ENCODE measurements at regions of chr9 and their contacts with region 1.

Region 1: DNA sequence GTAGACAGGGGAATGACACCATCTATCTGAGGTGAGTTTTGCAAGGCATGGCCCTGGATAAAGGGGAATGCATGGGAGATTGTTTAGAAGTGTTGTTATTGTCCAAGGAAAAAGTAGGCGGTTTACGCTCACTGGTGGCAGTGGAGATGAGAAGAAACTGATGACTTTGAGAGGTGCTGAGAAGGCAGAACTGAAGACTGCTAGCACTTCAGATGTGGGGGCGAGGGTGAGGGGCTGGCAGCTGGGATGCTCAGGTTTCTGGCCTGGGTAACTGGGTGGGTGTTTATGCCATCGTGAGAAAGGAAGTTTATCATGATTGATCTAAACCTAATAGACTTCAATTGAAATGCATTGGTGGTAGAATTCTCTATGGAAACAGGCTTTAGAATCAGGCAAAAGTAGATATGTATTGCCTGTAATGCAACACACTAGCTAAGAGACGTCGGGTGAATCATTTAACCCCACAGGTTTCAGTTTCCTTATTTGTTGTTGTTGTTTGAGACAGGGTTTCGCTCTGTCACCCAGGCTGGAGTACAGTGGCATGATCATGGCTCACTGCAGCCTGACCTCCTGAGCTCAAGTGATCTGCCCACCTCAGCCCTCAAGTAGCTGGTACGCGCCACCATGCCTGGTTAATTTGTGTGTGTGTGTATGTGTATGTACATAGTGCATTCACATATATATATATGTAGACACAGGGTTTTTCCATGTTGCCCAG is 123.5 kb downstream of the SLC24A2 start:
- DNase-seq: no peak
- H3K4me3 Mint-ChIP-seq: no peak overlapping the region
- H3K27ac Mint-ChIP-seq: peak overlapping the region; percentile 43
- H3K4me1 Mint-ChIP-seq: peaks cover 12% of the 10 kb centered on the region
- H3K27me3 Mint-ChIP-seq: peaks cover 14% of the 10 kb centered on the region

Region 2: GRCh38 chr9:19493174-19493811 is 172.0 kb before region 1 on chr9:
- intact Hi-C with region 1: loop called (anchors 5 kb)
- DNase-seq: peak; percentile 19
- H3K4me3 Mint-ChIP-seq: no peak overlapping the region
- H3K27ac Mint-ChIP-seq: no peak overlapping the region
- H3K4me1 Mint-ChIP-seq: peaks cover 15% of the 10 kb centered on the region
- H3K27me3 Mint-ChIP-seq: peaks cover 5% of the 10 kb centered on the region

Measured in activated T-helper 2 cell treated with anti-CD3 and anti-CD28 coated beads, Interferon-gamma antibody, Interleukin-2, Interleukin-4, amounts not matched to agents 10 μg/mL and 5 μg/mL and 100 μg/mL, durations not matched to agents 14 hours and 24 hours and 36 hours (primary cell).